WTC11 (cell line): ENCODE measurements at regions of chr4 and their contacts with region 1.

Region 1: GRCh38 chr4:86934771-86935565 is at the start of gene AFF1:
- DNase-seq: peak; percentile 93
- ATAC-seq: peak; percentile 84
- H3K4me3 Mint-ChIP-seq: peak within 1 kb of the TSS; percentile 81
- H3K27ac Mint-ChIP-seq: peak within 1 kb of the TSS; percentile 95
- H3K4me1 Mint-ChIP-seq: peaks cover 44% of the 10 kb centered on the region
- H3K27me3 Mint-ChIP-seq: no peaks in the 10 kb centered on the region
- CTCF ChIP-seq: no peak
- total RNA-seq, gene AFF1: 72.6 to 93.4 TPM (median 83.9 TPM) in 3 replicates

Region 2: GRCh38 chr4:86569103-86569870 is 365.7 kb before region 1 on chr4:
- CTCF ChIA-PET with region 1: no interaction called
- POLR2A ChIA-PET with region 1: no interaction called
- DNase-seq: no peak
- ATAC-seq: no peak
- H3K4me3 Mint-ChIP-seq: no peak overlapping the region
- H3K27ac Mint-ChIP-seq: no peak overlapping the region
- H3K4me1 Mint-ChIP-seq: peaks cover 22% of the 10 kb centered on the region
- H3K27me3 Mint-ChIP-seq: no peaks in the 10 kb centered on the region
- CTCF ChIP-seq: no peak

Region 3: DNA sequence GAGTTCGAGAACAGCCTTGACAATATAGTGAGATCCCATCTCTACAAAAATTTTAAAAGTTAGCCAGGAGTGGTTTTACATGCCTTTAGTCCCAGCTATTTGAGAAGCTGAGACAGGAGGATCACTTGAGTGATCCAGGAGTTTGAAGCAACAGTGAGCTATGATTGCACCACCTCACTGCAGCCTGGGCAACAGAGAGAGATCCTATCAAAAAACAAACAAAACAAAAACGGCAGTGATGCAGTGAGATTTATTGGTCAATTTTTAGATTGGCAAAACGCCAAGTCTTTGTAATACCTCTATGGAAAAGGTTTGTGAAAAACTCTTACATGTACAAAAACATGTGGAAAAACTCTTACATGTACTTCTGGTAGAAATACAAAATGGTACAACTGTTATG is 249.6 kb before region 1 on chr4:
- CTCF ChIA-PET with region 1: no interaction called
- POLR2A ChIA-PET with region 1: no interaction called
- DNase-seq: no peak
- ATAC-seq: no peak
- H3K4me3 Mint-ChIP-seq: no peak overlapping the region
- H3K27ac Mint-ChIP-seq: no peak overlapping the region
- H3K4me1 Mint-ChIP-seq: peaks cover 13% of the 10 kb centered on the region
- H3K27me3 Mint-ChIP-seq: no peaks in the 10 kb centered on the region
- CTCF ChIP-seq: no peak

Region 4: DNA sequence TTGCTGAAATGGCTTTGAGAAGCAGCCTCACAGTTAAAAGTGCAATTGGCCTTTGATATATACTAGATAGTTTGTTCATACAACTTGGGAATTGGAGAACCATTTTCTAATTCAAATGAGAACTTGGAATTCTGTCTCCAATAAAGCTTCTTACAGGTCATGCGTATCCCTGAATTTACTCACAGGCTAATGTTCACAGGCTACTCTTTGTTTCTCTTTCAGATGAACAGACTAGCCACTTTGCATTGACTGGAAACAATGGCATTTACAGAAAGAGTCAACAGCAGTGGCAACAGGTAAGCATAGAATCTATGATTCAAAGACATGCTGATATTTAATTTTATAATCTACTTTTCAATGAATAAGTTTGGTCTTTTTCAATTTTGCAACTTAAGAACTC is 13.3 kb after region 1 on chr4:
- CTCF ChIA-PET with region 1: interaction called, 19 read pairs
- POLR2A ChIA-PET with region 1: interaction called, 16 read pairs
- DNase-seq: no peak
- ATAC-seq: peak; percentile 30
- H3K4me3 Mint-ChIP-seq: peak overlapping the region; percentile 38
- H3K27ac Mint-ChIP-seq: peak overlapping the region; percentile 97
- H3K4me1 Mint-ChIP-seq: peaks cover 89% of the 10 kb centered on the region
- H3K27me3 Mint-ChIP-seq: no peaks in the 10 kb centered on the region
- CTCF ChIP-seq: no peak

Region 5: GRCh38 chr4:86961605-86962295 is 26.8 kb after region 1 on chr4:
- CTCF ChIA-PET with region 1: interaction called, 12 read pairs
- POLR2A ChIA-PET with region 1: interaction called, 53 read pairs
- DNase-seq: no peak
- ATAC-seq: no peak
- H3K4me3 Mint-ChIP-seq: peak overlapping the region; percentile 68
- H3K27ac Mint-ChIP-seq: peak overlapping the region; percentile 99
- H3K4me1 Mint-ChIP-seq: peaks cover 59% of the 10 kb centered on the region
- H3K27me3 Mint-ChIP-seq: no peaks in the 10 kb centered on the region
- CTCF ChIP-seq: no peak

Region 6: DNA sequence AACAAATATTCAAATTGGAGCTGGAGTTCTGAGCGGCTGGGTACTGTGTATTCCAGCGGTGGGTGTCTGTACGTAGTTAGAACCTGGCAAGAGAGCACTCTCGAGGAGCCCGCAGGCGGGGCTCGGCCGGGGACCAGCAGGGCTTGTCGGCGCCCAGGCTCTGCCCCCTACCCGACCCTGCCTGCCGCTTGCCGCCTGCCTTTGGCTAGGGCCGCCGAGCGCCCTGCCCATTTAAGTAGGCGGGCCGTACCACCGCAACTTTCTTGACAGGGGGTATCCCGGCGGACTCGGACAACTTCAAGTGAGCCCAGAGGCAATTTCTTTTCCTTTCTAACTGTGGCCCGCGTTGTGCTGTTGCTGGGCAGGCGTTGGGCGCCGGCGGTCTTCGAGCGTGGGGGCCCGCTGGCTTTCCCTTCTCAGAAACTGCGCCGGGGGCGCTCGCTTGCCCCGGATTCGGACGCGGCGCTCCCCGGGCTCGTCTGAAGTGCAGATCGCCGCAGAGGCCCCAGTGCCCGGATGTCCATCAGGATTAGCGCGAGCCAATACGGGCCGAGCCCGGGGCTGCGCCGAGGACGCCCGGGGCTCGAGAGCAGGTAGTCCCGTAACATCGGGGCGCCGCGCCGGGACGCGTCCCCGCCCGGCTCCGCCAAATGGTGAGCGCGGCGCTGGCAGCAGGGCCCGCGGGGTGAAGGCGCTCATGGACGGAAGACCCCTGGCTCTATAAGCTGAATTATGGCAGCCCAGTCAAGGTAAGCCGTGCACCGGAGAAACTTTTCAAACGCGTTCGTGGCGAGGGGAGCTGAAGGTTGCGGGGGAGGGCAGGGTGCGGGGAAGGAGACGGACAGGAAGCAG is 71.9 kb after region 1 on chr4:
- CTCF ChIA-PET with region 1: interaction called, 13 read pairs
- POLR2A ChIA-PET with region 1: interaction called, 37 read pairs
- DNase-seq: peak; percentile 93
- ATAC-seq: peak; percentile 87
- H3K4me3 Mint-ChIP-seq: peak overlapping the region; percentile 90
- H3K27ac Mint-ChIP-seq: peak overlapping the region; percentile 96
- H3K4me1 Mint-ChIP-seq: peaks cover 81% of the 10 kb centered on the region
- H3K27me3 Mint-ChIP-seq: no peaks in the 10 kb centered on the region
- CTCF ChIP-seq: no peak

Region 7: DNA sequence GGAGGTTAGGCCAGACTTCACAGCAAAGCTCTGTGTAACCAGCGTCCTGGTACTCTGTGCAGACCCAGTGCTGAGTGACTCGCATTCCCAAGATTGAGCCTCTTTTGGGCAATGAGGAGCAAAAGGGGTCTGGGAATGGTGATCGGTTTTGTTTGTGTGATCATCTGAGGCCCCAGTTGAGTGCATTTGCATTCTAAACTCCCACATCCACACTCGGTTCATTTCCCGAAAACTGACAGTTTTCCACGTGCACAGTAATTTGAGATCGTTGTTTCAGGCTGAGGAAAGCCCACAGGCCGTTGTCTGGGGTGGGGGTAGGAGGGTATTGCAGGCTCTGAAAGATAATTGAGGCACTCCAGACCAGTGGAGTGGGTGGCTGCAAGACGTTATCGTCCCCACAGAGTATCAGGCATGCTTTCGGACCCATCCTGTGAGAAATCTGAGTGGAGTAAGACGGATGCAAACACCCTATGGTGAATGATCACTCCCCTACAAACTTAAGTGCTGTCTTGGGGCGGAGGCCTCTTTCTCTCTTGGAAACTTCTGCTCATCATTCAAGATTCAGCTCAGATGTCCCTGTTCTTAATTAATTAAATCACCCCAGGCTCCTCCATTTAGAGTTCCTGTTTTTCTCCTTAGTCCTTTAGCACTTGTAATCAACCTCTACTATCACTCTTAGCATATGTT is 95.9 kb after region 1 on chr4:
- CTCF ChIA-PET with region 1: interaction called, 11 read pairs
- POLR2A ChIA-PET with region 1: interaction called, 5 read pairs
- DNase-seq: no peak
- ATAC-seq: peak; percentile 25
- H3K4me3 Mint-ChIP-seq: no peak overlapping the region
- H3K27ac Mint-ChIP-seq: no peak overlapping the region
- H3K4me1 Mint-ChIP-seq: peaks cover 27% of the 10 kb centered on the region
- H3K27me3 Mint-ChIP-seq: no peaks in the 10 kb centered on the region
- CTCF ChIP-seq: no peak

Region 8: GRCh38 chr4:87053802-87054767 is 119.1 kb after region 1 on chr4:
- CTCF ChIA-PET with region 1: interaction called, 11 read pairs
- POLR2A ChIA-PET with region 1: interaction called, 5 read pairs
- DNase-seq: no peak
- ATAC-seq: peak; percentile 50
- H3K4me3 Mint-ChIP-seq: no peak overlapping the region
- H3K27ac Mint-ChIP-seq: peak overlapping the region; percentile 75
- H3K4me1 Mint-ChIP-seq: peaks cover 65% of the 10 kb centered on the region
- H3K27me3 Mint-ChIP-seq: no peaks in the 10 kb centered on the region
- CTCF ChIP-seq: no peak

Region 9: DNA sequence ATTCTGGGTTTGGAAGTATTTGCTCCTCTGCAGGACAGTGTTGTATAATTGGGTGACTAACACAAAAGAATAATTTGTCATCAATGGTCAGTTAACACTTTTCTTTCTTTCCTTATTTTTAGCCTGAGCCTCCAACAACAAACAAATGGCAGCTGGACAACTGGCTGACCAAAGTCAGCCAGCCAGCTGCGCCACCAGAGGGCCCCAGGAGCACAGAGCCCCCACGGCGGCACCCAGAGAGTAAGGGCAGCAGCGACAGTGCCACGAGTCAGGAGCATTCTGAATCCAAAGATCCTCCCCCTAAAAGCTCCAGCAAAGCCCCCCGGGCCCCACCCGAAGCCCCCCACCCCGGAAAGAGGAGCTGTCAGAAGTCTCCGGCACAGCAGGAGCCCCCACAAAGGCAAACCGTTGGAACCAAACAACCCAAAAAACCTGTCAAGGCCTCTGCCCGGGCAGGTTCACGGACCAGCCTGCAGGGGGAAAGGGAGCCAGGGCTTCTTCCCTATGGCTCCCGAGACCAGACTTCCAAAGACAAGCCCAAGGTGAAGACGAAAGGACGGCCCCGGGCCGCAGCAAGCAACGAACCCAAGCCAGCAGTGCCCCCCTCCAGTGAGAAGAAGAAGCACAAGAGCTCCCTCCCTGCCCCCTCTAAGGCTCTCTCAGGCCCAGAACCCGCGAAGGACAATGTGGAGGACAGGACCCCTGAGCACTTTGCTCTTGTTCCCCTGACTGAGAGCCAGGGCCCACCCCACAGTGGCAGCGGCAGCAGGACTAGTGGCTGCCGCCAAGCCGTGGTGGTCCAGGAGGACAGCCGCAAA is 179.5 kb after region 1 on chr4:
- CTCF ChIA-PET with region 1: interaction called, 14 read pairs
- POLR2A ChIA-PET with region 1: no interaction called
- DNase-seq: peak; percentile 67
- ATAC-seq: peak; percentile 85
- H3K4me3 Mint-ChIP-seq: no peak overlapping the region
- H3K27ac Mint-ChIP-seq: peak overlapping the region; percentile 78
- H3K4me1 Mint-ChIP-seq: peaks cover 36% of the 10 kb centered on the region
- H3K27me3 Mint-ChIP-seq: no peaks in the 10 kb centered on the region
- CTCF ChIP-seq: no peak